Head of caudate nucleus (tissue), 42 donors: ENCODE measurements at regions of chr17 and their contacts with region 1.

Region 1: GRCh38 chr17:4560837-4561256 is 470 bp upstream of the GGT6 start:
- DNase-seq: no peak

Region 2: GRCh38 chr17:4625181-4625617 is 64.4 kb after region 1 on chr17:
- intact Hi-C with region 1: loop called (anchors 5 kb)
- DNase-seq: no peak